ENCODE measurements at regions of chr2 and their contacts with region 1.

Region 1: GRCh38 chr2:9852881-9853280 is 9.6 kb downstream of the TAF1B start:
- DNase-seq: no peak
- ATAC-seq: no peak
- H3K4me3 ChIP-seq: no peak overlapping the region
- H3K27ac ChIP-seq: no peak overlapping the region
- H3K4me1 ChIP-seq: no peaks in the 10 kb centered on the region
- H3K27me3 ChIP-seq: no peaks in the 10 kb centered on the region
- CTCF ChIP-seq: no peak

Region 2: GRCh38 chr2:9693211-9693520 is 159.7 kb before region 1 on chr2:
- intact Hi-C with region 1: no loop called
- DNase-seq: peak; percentile 83 to 92
- ATAC-seq: peak; percentile 94 to 98 (median 96)
- H3K4me3 ChIP-seq: peak overlapping the region; percentile 54
- H3K27ac ChIP-seq: peak overlapping the region; percentile 96
- H3K4me1 ChIP-seq: peaks cover 19% of the 10 kb centered on the region
- H3K27me3 ChIP-seq: no peaks in the 10 kb centered on the region
- CTCF ChIP-seq: no peak

Region 3: DNA sequence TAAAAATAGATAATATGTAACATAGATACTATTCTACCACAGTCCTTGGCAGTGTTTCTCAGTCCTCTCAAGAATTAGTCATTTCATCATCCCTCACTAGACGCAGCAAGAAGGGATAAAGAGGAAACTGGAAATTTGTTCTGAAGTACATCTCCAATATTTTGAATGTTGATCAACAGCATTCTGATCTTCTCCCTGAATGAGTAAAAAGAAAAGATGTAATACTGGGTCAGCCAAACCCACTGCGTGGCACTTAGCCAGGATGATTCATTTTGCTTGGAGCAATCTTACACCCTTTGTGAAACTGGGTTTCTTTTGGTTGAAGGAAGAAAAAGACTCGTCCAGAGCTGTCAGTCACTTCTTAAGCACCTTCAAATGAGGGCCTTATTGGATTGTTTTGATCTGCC is 44.5 kb after region 1 on chr2:
- intact Hi-C with region 1: loop called in 1 of 2 experiments (anchors 5 kb)
- DNase-seq: peak; percentile 71 to 73
- ATAC-seq: peak; percentile 81 to 90 (median 83)
- H3K4me3 ChIP-seq: no peak overlapping the region
- H3K27ac ChIP-seq: peak overlapping the region; percentile 57
- H3K4me1 ChIP-seq: peaks cover 19% of the 10 kb centered on the region
- H3K27me3 ChIP-seq: no peaks in the 10 kb centered on the region
- CTCF ChIP-seq: no peak

Region 4: DNA sequence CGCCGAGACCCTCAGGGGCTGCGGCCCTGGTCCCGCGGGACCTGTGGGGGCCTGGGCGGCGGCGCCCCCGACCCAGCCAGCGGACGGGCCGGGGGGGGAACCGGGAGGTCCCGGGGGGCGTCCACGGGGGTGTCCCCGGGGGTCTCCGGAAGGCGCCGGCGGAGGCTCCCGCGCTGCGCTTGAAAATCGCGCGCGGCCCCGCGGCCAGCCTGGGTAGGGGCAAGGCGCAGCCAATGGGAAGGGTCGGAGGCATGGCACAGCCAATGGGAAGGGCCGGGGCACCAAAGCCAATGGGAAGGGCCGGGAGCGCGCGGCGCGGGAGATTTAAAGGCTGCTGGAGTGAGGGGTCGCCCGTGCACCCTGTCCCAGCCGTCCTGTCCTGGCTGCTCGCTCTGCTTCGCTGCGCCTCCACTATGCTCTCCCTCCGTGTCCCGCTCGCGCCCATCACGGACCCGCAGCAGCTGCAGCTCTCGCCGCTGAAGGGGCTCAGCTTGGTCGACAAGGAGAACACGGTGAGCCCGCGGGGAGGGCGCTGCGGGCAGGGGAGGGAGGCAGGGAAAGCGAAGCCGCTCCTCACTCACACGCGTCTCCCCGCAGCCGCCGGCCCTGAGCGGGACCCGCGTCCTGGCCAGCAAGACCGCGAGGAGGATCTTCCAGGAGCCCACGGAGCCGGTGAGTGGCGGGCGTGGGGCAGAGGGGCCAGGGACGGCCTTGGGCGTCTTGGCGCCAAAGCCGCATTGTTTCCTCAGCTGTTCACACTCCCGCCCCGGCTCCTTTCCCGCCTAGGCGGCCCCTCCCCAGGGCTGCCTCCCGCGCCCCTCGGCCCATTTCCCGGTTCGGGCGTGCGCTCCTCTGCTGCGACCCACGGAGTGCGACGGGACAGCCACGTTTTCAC is 269.8 kb after region 1 on chr2 and contains the start of gene RRM2:
- intact Hi-C with region 1: no loop called
- DNase-seq: peak; percentile 91 to 97
- ATAC-seq: peak; percentile 89 to 92 (median 90)
- H3K4me3 ChIP-seq: peak within 1 kb of the TSS; percentile 69
- H3K27ac ChIP-seq: no peak within 1 kb of the TSS
- H3K4me1 ChIP-seq: peaks cover 27% of the 10 kb centered on the region
- H3K27me3 ChIP-seq: peaks cover 0 to 12% (median 2%) of the 10 kb centered on the region in 3 donors
- CTCF ChIP-seq: no peak
- total RNA-seq, gene RRM2: 0.27 to 1.3 TPM in 2 of 4 donors, not detected in the others

Measured in psoas muscle (tissue), 8 donors.